Caco-2 (cell line): ENCODE measurements at regions of chr6 and their contacts with region 1.

Region 1: DNA sequence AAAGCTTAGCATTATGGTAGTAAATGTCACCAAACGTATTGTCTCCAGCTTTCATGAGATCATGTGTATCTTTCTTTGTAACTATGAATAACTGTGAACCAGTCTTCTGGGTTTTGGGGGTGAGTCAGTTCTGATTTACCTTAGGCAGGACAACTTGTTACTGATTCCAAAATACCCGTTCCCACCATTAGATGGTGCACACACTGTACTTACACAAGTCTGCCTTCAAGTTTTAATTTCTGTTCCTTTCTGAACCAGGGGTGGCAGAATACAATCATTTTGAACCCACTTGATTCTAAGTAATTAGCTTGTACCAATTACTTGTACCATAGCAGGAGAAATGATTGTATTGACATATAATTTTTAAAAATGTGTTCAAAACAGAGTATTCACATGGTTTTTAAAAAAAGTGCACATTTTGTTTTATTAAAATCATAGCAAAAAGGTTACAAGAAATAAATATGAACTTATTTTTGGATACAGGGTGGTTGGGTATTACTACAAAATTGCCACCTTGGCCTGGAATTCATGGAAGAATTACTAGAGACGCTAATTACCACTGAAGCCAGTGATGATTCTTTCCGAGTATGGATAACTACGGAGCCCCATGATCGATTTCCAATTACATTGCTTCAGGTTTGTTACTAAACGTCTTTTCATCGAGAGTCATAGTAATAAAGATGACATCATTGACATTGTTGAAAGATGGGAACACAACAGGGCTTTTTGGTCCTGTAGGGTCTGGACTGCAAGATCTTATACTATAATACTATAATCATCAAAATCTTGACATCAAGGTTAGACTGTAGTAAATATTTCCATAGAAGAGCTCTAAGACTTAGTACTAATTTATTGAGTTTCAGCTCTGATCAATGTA is 75.2 kb upstream of the GLP1R start:
- DNase-seq: peak in 1 of 2 experiments; percentile 68
- H3K4me3 ChIP-seq: no peak overlapping the region
- H3K4me3 Mint-ChIP-seq: no peak overlapping the region
- H3K27ac Mint-ChIP-seq: no peak overlapping the region
- H3K4me1 ChIP-seq: peaks cover 36% of the 10 kb centered on the region
- H3K4me1 Mint-ChIP-seq: peaks cover 32% of the 10 kb centered on the region
- H3K27me3 ChIP-seq: no peaks in the 10 kb centered on the region
- H3K27me3 Mint-ChIP-seq: peaks cover 5% of the 10 kb centered on the region
- CTCF ChIP-seq: peak; percentile 75 to 82

Region 2: DNA sequence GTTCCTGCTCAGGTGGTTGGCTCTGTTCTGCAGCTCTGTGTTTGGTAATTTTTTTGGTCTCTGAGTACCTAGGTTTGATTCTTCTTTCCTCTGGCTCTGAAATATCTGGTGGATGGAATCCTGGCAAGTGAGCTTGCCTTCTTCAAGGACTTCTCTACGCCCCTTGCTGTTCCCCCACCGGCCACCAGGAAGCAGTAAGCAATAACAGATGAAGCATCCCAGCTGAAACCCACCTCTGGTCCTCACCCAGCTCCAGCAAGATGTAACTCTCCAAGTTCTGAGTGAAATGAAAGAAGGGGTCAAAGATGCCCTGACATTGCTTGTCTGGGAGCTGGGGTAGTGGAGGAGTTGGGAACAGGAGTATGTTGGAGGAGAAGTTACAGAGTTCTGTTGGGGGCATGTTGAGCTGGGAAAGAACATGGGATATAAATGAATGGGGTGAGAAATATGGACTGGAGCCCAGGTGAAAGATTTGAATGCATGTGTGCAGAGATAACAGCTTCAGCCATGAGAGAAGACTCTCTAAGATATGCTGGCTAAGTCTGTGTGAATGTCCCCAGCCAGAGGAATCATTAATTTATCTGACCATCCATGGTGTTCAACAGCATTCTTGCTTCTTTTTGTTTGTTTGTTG is 23.8 kb after region 1 on chr6:
- CTCF ChIA-PET with region 1: interaction called, 11 read pairs
- POLR2A ChIA-PET with region 1: no interaction called
- intact Hi-C with region 1: no loop called
- DNase-seq: peak; percentile 62 to 71
- H3K4me3 ChIP-seq: no peak overlapping the region
- H3K4me3 Mint-ChIP-seq: no peak overlapping the region
- H3K27ac Mint-ChIP-seq: no peak overlapping the region
- H3K4me1 ChIP-seq: no peaks in the 10 kb centered on the region
- H3K4me1 Mint-ChIP-seq: no peaks in the 10 kb centered on the region
- H3K27me3 ChIP-seq: no peaks in the 10 kb centered on the region
- H3K27me3 Mint-ChIP-seq: peaks cover 14% of the 10 kb centered on the region
- CTCF ChIP-seq: peak; percentile 69 to 88

Region 3: GRCh38 chr6:39018107-39018506 is 44.7 kb after region 1 on chr6:
- CTCF ChIA-PET with region 1: no interaction called
- POLR2A ChIA-PET with region 1: no interaction called
- intact Hi-C with region 1: no loop called
- DNase-seq: no peak
- H3K4me3 ChIP-seq: no peak overlapping the region
- H3K4me3 Mint-ChIP-seq: no peak overlapping the region
- H3K27ac Mint-ChIP-seq: no peak overlapping the region
- H3K4me1 ChIP-seq: no peaks in the 10 kb centered on the region
- H3K4me1 Mint-ChIP-seq: no peaks in the 10 kb centered on the region
- H3K27me3 ChIP-seq: no peaks in the 10 kb centered on the region
- H3K27me3 Mint-ChIP-seq: no peaks in the 10 kb centered on the region
- CTCF ChIP-seq: no peak

Region 4: DNA sequence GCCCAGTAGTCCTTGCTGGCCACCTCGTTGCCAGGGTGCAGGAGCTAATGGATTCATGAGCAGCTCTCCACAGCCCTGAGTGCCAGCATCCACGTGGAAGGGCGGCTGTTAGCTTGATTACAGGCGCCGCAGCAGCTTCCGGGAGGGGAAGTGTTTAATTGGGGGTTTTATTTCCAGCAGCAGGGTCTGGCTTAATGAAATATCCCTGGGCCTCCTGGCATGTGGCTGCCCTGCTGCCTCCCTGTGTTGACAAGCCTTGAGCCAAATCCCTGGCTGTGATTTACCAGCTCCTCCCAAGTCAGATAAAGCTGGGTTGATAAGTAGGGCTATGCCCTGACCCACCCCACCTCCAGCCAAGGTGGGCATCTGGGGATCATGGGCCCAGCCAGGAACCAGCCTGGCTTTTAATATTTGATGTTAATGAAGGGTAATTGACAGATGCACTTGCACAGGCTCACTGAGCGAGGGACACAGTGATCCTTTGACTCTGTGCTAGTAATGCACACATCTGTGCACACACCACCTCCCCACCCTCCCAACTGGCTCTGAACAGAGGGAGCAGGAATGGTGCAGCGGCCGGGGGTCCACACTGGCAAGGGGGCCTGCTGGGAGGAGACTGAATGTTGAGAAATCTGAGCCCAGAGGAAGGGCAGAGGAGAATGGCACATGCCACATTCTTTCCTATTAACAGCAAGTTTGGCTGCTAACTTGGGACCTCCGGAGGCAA is 88.8 kb after region 1 on chr6:
- CTCF ChIA-PET with region 1: no interaction called
- POLR2A ChIA-PET with region 1: no interaction called
- intact Hi-C with region 1: loop called (anchors 5 kb)
- DNase-seq: no peak
- H3K4me3 ChIP-seq: no peak overlapping the region
- H3K4me3 Mint-ChIP-seq: no peak overlapping the region
- H3K27ac Mint-ChIP-seq: peak overlapping the region; percentile 89
- H3K4me1 ChIP-seq: peaks cover 43% of the 10 kb centered on the region
- H3K4me1 Mint-ChIP-seq: peaks cover 41% of the 10 kb centered on the region
- H3K27me3 ChIP-seq: no peaks in the 10 kb centered on the region
- H3K27me3 Mint-ChIP-seq: no peaks in the 10 kb centered on the region
- CTCF ChIP-seq: no peak

Region 5: GRCh38 chr6:39157511-39157910 is 184.1 kb after region 1 on chr6:
- CTCF ChIA-PET with region 1: no interaction called
- POLR2A ChIA-PET with region 1: no interaction called
- intact Hi-C with region 1: loop called (anchors 1 kb)
- DNase-seq: no peak
- H3K4me3 ChIP-seq: no peak overlapping the region
- H3K4me3 Mint-ChIP-seq: no peak overlapping the region
- H3K27ac Mint-ChIP-seq: no peak overlapping the region
- H3K4me1 ChIP-seq: no peaks in the 10 kb centered on the region
- H3K4me1 Mint-ChIP-seq: peaks cover 7% of the 10 kb centered on the region
- H3K27me3 ChIP-seq: no peaks in the 10 kb centered on the region
- H3K27me3 Mint-ChIP-seq: peaks cover under 1% of the 10 kb centered on the region
- CTCF ChIP-seq: no peak

Region 6: GRCh38 chr6:39309942-39310531 is 336.6 kb after region 1 on chr6:
- CTCF ChIA-PET with region 1: no interaction called
- POLR2A ChIA-PET with region 1: interaction called, 3 read pairs
- intact Hi-C with region 1: loop called (anchors 1 kb)
- DNase-seq: peak; percentile 74 to 85
- H3K4me3 ChIP-seq: no peak overlapping the region
- H3K4me3 Mint-ChIP-seq: no peak overlapping the region
- H3K27ac Mint-ChIP-seq: no peak overlapping the region
- H3K4me1 ChIP-seq: no peaks in the 10 kb centered on the region
- H3K4me1 Mint-ChIP-seq: no peaks in the 10 kb centered on the region
- H3K27me3 ChIP-seq: peaks cover 7% of the 10 kb centered on the region
- H3K27me3 Mint-ChIP-seq: peaks cover 12% of the 10 kb centered on the region
- CTCF ChIP-seq: peak; percentile 92